CD8-positive, alpha-beta memory T cell (primary cell): ENCODE measurements at regions of chr4 and their contacts with region 1.

Region 1: DNA sequence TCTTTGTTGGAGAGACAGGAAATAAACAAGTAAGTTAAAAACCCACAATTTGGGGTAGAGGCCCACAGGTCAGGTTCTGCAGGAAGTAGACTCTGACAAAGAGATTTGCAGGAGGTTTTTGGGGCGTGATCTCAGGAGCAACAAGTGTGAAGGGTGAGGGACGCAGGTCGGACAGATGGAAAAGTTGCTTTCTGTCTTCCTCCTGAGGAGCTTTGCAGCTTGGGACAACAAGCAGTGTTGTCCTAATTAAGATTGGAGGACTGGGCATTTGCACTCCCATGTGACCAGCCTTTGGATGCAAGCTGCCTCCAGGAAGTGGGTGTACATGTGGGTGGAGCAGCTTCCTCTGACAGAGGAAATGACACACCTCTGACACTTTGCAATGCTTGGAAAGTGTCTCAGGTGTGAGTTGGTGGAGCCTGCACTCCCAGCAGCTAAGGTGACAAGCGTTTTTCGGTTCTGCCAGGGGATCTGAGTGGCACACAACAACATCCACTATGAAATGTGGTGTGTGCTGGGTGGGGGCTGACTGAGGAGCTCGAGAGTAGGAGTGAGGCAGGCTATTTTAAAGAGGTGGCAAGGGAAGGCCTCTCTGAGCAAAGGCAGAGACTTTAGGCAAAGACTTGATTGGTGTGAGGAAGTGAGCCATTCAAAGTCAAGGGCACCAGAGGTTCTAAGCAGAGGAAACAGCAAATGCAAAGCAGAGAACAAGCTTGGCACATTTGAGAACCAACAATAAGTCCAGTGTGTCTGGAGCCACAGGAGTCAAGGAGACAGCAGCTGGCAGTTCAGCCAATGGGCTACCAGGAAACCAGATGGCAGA is 339.8 kb upstream of the GATB start:
- DNase-seq: peak; percentile 55 to 92 (median 86)
- H3K4me3 ChIP-seq: peak overlapping the region; percentile 54
- H3K4me3 Mint-ChIP-seq: peak overlapping the region; percentile 77 to 91 (median 83)
- H3K27ac ChIP-seq: peak overlapping the region; percentile 68
- H3K27ac Mint-ChIP-seq: peak overlapping the region; percentile 94 to 100 (median 97)
- H3K4me1 ChIP-seq: peaks cover 99% of the 10 kb centered on the region
- H3K4me1 Mint-ChIP-seq: peaks cover 87 to 97% (median 96%) of the 10 kb centered on the region in 3 donors
- H3K27me3 ChIP-seq: no peaks in the 10 kb centered on the region
- H3K27me3 Mint-ChIP-seq: no peaks in the 10 kb centered on the region

Region 2: DNA sequence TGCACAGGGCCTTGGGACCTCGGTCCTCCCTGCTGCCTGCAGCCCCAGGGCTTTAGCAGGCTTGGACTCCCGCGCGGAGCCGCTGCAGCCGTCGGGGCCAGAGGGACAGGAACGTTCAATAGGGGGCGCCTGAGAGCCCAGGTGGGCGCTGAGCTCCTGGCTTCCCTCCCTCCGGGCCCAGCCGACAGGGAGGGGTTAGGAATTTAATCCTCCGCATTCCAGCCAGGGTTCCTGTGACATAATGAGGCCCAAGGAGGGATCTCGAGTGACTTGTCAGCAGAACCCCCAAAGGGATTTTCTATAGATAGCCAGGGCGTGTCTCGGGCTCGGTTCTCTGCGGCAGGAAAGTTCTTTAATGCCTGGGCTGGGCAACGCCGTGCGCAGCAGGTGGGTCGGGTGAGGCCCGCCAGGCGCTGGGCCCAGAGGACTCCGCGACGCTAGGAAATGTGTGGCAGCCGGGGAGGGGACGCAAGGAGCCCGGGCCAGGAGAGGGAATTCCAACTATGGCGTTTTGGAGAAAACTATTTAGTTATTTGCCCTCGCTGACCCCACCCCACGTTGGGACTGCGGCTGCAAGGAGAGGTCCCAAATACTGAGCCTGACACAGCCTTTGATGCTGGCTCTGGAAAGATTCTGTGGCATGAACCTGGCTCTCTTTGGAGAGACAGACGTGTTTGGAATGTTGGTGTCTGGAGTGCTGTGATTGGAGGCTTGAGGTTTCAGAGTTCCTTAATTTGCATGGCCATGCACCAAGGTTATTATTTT is 54.6 kb before region 1 on chr4:
- CTCF ChIA-PET with region 1: no interaction called
- POLR2A ChIA-PET with region 1: interaction called, 10 read pairs
- DNase-seq: peak in 1 of 5 donors; percentile 7
- H3K4me3 ChIP-seq: no peak overlapping the region
- H3K4me3 Mint-ChIP-seq: peak overlapping the region in 1 of 7 donors; percentile 32
- H3K27ac ChIP-seq: no peak overlapping the region
- H3K27ac Mint-ChIP-seq: no peak overlapping the region
- H3K4me1 ChIP-seq: no peaks in the 10 kb centered on the region
- H3K4me1 Mint-ChIP-seq: peaks cover 0 to 12% (median 3%) of the 10 kb centered on the region in 3 donors
- H3K27me3 ChIP-seq: no peaks in the 10 kb centered on the region
- H3K27me3 Mint-ChIP-seq: peaks cover 3 to 4% of the 10 kb centered on the region in 2 donors

Region 3: GRCh38 chr4:152115794-152116193 is 15.2 kb after region 1 on chr4:
- CTCF ChIA-PET with region 1: interaction called, 3 read pairs
- POLR2A ChIA-PET with region 1: interaction called, 10 read pairs
- DNase-seq: peak in 4 of 5 donors; percentile 34 to 69 (median 65)
- H3K4me3 ChIP-seq: peak overlapping the region; percentile 68
- H3K4me3 Mint-ChIP-seq: peak overlapping the region; percentile 76 to 84 (median 81)
- H3K27ac ChIP-seq: no peak overlapping the region
- H3K27ac Mint-ChIP-seq: peak overlapping the region; percentile 86 to 100 (median 95)
- H3K4me1 ChIP-seq: peaks cover 52% of the 10 kb centered on the region
- H3K4me1 Mint-ChIP-seq: peaks cover 55 to 70% (median 63%) of the 10 kb centered on the region in 3 donors
- H3K27me3 ChIP-seq: no peaks in the 10 kb centered on the region
- H3K27me3 Mint-ChIP-seq: no peaks in the 10 kb centered on the region

Region 4: GRCh38 chr4:152255437-152256011 is 154.9 kb after region 1 on chr4:
- CTCF ChIA-PET with region 1: interaction called, 3 read pairs
- POLR2A ChIA-PET with region 1: interaction called, 10 read pairs
- DNase-seq: peak; percentile 24 to 79 (median 63)
- H3K4me3 ChIP-seq: no peak overlapping the region
- H3K4me3 Mint-ChIP-seq: no peak overlapping the region
- H3K27ac ChIP-seq: no peak overlapping the region
- H3K27ac Mint-ChIP-seq: no peak overlapping the region
- H3K4me1 ChIP-seq: peaks cover 50% of the 10 kb centered on the region
- H3K4me1 Mint-ChIP-seq: peaks cover 7 to 28% (median 9%) of the 10 kb centered on the region in 3 donors
- H3K27me3 ChIP-seq: no peaks in the 10 kb centered on the region
- H3K27me3 Mint-ChIP-seq: no peaks in the 10 kb centered on the region